ENCODE measurements at regions of chr1 and their contacts with region 1.

Region 1: GRCh38 chr1:224113918-224114786 is at the start of gene FBXO28:
- DNase-seq: peak; percentile 96 to 97 (median 97)
- ATAC-seq: peak; percentile 100
- H3K4me3 ChIP-seq: peak within 1 kb of the TSS; percentile 59
- H3K27ac ChIP-seq: peak within 1 kb of the TSS; percentile 55
- H3K4me1 ChIP-seq: no peaks in the 10 kb centered on the region
- H3K27me3 ChIP-seq: no peaks in the 10 kb centered on the region
- total RNA-seq, gene FBXO28: 16.6 to 19.9 (median 19.4) TPM

Region 2: GRCh38 chr1:224329842-224330753 is 215.9 kb after region 1 on chr1 and contains the start of gene NVL:
- intact Hi-C with region 1: loop called in 3 of 4 experiments (anchors 2 to 10 kb)
- DNase-seq: peak; percentile 86 to 91 (median 91)
- ATAC-seq: peak; percentile 98
- H3K4me3 ChIP-seq: peak within 1 kb of the TSS; percentile 74
- H3K27ac ChIP-seq: peak within 1 kb of the TSS; percentile 98
- H3K4me1 ChIP-seq: peaks cover 1% of the 10 kb centered on the region
- H3K27me3 ChIP-seq: no peaks in the 10 kb centered on the region
- total RNA-seq, gene NVL: 9.8 to 14.4 (median 11.9) TPM

Region 3: GRCh38 chr1:224454397-224455066 is 340.4 kb after region 1 on chr1:
- intact Hi-C with region 1: loop called in 2 of 4 experiments (anchors 2 to 10 kb)
- DNase-seq: no peak
- ATAC-seq: no peak
- H3K4me3 ChIP-seq: no peak overlapping the region
- H3K27ac ChIP-seq: no peak overlapping the region
- H3K4me1 ChIP-seq: peaks cover 6% of the 10 kb centered on the region
- H3K27me3 ChIP-seq: no peaks in the 10 kb centered on the region